Sciatic nerve (tissue), 2 donors: ENCODE measurements at regions of chr14 and their contacts with region 1.

Region 1: DNA sequence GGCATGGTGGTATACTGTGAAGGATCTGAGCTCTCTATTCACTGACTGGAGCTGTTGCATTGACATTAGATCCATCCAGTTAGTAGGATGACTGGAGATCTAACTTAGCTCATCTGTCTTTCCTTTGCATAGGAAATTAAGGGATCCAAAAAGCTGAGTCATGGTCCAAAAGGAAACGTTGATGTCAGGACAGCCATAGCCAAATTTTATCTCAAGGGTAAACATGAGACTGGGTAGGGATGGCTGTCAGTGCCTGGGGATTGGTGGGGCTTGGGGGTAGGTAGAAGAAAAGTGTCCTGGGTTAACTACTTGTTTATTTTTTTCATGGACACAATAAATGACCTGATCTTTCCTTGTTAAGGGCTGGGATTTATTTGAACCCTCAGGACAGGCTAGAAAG is 4.6 kb downstream of the FAM177A1 start:
- DNase-seq: no peak
- ATAC-seq: no peak

Region 2: GRCh38 chr14:33767586-33768457 is 1282.8 kb before region 1 on chr14:
- intact Hi-C with region 1: no loop called
- DNase-seq: no peak
- ATAC-seq: peak; percentile 53

Region 3: DNA sequence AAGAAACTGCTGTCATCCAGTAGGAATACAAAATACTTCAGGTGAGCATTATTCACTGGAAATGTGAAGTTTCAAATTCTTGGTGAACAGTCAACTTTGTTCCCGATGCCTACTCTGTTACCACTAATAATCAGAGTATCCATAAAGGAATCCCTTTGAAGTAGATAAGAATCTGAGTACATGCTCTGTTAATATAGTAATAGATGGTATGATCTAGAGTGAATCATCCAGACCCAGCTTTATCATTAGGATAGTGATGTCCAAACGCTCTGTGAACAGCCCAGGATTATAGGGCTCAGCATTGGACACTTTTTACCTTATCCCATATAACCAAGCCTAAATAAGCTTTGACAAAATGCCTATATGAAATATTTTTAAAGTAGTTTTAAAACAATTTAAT is 37.9 kb after region 1 on chr14:
- intact Hi-C with region 1: no loop called
- DNase-seq: no peak
- ATAC-seq: no peak

Region 4: DNA sequence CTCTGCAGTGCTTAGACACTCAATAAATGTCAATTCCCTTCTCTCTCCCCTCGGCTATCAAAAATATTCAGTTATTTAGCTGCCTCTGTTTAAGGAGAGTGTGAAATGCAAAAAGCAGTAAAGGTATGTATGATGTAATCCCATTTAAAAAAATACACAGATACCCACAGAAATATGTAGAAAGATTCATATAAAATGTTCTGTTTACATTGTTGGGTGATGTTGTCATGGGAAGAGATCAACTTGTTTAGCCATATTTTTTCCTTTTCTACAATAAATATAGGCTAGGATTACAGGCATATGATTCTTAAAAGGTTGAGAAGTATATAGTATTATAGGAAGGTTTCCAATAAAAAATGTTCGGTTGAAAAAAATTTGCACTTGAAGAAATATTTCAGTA is 63.4 kb after region 1 on chr14:
- intact Hi-C with region 1: loop called (anchors 10 kb)
- DNase-seq: no peak
- ATAC-seq: no peak